ENCODE measurements at regions of chr17 and their contacts with region 1.

Region 1: GRCh38 chr17:36697903-36698530 is 96.6 kb downstream of the MRM1 start:
- DNase-seq: no peak
- ATAC-seq: no peak
- H3K4me3 ChIP-seq: no peak overlapping the region
- H3K27ac ChIP-seq: no peak overlapping the region
- H3K4me1 ChIP-seq: no peaks in the 10 kb centered on the region
- H3K27me3 ChIP-seq: peaks cover 0 to 68% (median 14%) of the 10 kb centered on the region in 9 donors
- CTCF ChIP-seq: no peak
- POLR2A ChIP-seq: no peak

Region 2: GRCh38 chr17:36627101-36627500 is 70.9 kb before region 1 on chr17:
- intact Hi-C with region 1: no loop called
- DNase-seq: no peak
- ATAC-seq: no peak
- H3K4me3 ChIP-seq: no peak overlapping the region
- H3K27ac ChIP-seq: no peak overlapping the region
- H3K4me1 ChIP-seq: peaks cover 0 to 9% (median 0%) of the 10 kb centered on the region in 12 donors
- H3K27me3 ChIP-seq: peaks cover 0 to 9% (median 0%) of the 10 kb centered on the region in 9 donors
- CTCF ChIP-seq: no peak
- POLR2A ChIP-seq: no peak

Region 3: GRCh38 chr17:36736201-36737156 is 38.5 kb after region 1 on chr17:
- intact Hi-C with region 1: loop called in 1 of 10 experiments (anchors 5 kb)
- DNase-seq: no peak
- ATAC-seq: no peak
- H3K4me3 ChIP-seq: no peak overlapping the region
- H3K27ac ChIP-seq: no peak overlapping the region
- H3K4me1 ChIP-seq: no peaks in the 10 kb centered on the region
- H3K27me3 ChIP-seq: peaks cover 3 to 78% (median 14%) of the 10 kb centered on the region in 9 donors
- CTCF ChIP-seq: no peak
- POLR2A ChIP-seq: no peak

Region 4: DNA sequence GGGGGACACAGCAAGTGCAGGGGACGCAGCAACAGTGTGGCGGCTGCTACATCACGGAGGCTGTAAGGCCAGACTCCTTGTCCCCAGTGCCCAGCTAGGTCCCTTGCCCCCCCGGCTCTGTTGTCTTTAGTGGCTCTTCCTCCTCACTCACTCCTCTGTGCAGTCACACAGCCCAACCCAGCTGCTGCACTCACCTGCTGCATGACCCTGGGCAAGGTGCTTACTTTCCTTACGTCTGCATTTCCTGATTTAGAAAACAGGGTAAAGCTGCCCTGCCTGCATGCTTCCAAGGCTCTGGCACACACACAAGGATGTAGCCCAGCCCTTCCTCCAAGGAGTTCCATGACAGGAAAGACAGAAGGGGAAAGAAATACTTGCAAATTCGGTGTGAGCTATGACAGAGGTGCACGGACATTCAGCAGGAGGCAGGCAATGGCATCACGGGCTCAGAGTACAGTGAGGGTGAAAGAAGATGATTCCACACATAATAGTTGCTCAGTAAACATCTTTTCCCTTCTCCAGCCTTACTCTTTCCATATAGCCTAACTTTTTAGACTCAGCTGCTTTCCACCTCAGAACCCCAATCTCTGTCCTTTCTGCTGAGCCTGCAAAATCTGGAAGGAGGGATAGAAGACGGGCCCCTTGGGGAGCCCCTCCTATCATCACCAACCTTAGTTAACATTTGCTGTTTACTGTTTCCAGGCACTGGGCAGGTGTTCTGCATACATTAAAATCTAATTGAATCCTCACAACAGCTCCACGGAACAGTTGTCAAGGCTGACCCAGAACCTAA is 54.3 kb after region 1 on chr17:
- intact Hi-C with region 1: no loop called
- DNase-seq: no peak
- ATAC-seq: no peak
- H3K4me3 ChIP-seq: no peak overlapping the region
- H3K27ac ChIP-seq: no peak overlapping the region
- H3K4me1 ChIP-seq: no peaks in the 10 kb centered on the region
- H3K27me3 ChIP-seq: peaks cover 0 to 56% (median 7%) of the 10 kb centered on the region in 9 donors
- CTCF ChIP-seq: no peak
- POLR2A ChIP-seq: no peak

Measured in heart left ventricle (tissue), 16 donors.